ENCODE measurements at regions of chr10 and their contacts with region 1.

Region 1: DNA sequence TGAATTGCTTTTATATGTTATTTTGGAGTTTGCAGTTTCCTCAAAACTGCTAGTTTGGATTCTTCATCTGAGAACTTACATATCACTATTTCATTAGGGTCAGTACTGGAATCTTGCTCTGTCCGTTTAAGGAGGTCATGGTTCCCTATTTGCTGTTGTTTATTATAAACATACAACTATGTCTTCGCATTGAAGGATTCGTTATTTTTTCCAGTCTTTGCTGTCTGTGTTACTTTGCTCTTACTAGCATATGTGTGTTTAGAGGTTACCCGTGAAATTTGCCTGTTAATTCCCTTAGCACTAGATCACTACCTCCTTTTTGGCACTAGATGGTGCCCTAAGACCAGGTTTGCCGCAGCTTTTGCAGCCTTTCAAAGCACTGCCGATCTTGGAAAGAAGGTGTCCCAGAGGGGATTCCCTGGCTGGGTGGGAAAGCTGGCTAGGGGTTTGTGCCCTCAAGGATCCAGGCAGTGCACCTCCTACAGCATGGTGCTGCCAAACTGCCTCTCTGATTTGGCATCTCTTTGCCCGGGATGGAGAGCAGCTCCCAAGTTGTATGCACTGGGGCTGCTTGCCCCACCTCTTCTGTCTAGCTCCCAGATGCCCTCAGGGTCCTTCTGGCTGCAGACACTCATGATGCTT is 103.1 kb upstream of the APBB1IP start:
- DNase-seq: peak; percentile 64
- CTCF ChIP-seq: peak; percentile 72

Region 2: GRCh38 chr10:26566525-26567350 is 231.7 kb after region 1 on chr10:
- in situ Hi-C with region 1: loop called (anchors 10 kb)
- DNase-seq: no peak
- CTCF ChIP-seq: no peak

Region 3: GRCh38 chr10:26697163-26697921 is 362.3 kb after region 1 on chr10 and contains the start of gene PDSS1:
- in situ Hi-C with region 1: loop called (anchors 25 kb)
- DNase-seq: peak; percentile 92
- CTCF ChIP-seq: no peak

Region 4: GRCh38 chr10:26860443-26861204 is 525.6 kb after region 1 on chr10 and contains the start of gene ABI1:
- in situ Hi-C with region 1: loop called (anchors 10 kb)
- DNase-seq: peak; percentile 95
- CTCF ChIP-seq: no peak

Measured in GM13976 (cell line).